Heart left ventricle (tissue), 16 donors: ENCODE measurements at regions of chr12 and their contacts with region 1.

Region 1: DNA sequence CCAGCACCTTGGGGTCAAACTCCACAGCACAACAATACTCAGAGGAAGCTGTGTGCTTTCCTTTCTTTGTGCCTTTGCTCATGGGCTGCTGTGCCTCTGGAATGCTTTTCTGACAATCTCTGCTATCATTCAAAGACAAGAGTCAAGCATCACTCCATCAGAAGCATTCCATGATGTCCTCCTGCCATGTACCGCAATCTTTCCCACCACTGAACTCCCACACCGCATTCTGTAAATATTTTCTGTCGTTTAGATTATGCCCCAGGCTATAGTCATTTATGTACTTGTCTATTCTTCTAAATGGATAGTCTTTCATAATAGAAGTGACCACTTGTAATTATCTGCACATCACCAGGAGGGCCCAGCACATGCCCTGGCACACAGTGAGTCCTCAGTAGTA is 327.8 kb downstream of the PDZRN4 start:
- DNase-seq: no peak
- ATAC-seq: no peak
- H3K4me3 ChIP-seq: no peak overlapping the region
- H3K27ac ChIP-seq: no peak overlapping the region
- H3K4me1 ChIP-seq: peaks cover 0 to 15% (median 4%) of the 10 kb centered on the region in 12 donors
- H3K27me3 ChIP-seq: no peaks in the 10 kb centered on the region
- CTCF ChIP-seq: no peak
- POLR2A ChIP-seq: no peak

Region 2: GRCh38 chr12:41531147-41531829 is 15.3 kb after region 1 on chr12:
- intact Hi-C with region 1: loop called in 1 of 10 experiments (anchors 2 kb)
- DNase-seq: peak; percentile 60 to 79 (median 74)
- ATAC-seq: peak; percentile 64 to 97 (median 82)
- H3K4me3 ChIP-seq: no peak overlapping the region
- H3K27ac ChIP-seq: peak overlapping the region in 2 of 12 donors; percentile 25 to 33
- H3K4me1 ChIP-seq: no peaks in the 10 kb centered on the region
- H3K27me3 ChIP-seq: no peaks in the 10 kb centered on the region
- CTCF ChIP-seq: no peak
- POLR2A ChIP-seq: no peak